PC-9 (cell line): ENCODE measurements at regions of chr17 and their contacts with region 1.

Region 1: GRCh38 chr17:33225509-33225908 is 67.6 kb downstream of the ASIC2 start:
- DNase-seq: peak in 1 of 2 experiments; percentile 17
- H3K4me3 ChIP-seq: no peak overlapping the region
- H3K27ac ChIP-seq: no peak overlapping the region
- H3K4me1 ChIP-seq: no peaks in the 10 kb centered on the region
- H3K27me3 ChIP-seq: peaks cover 10% of the 10 kb centered on the region; the same call in 1 of the 2 replicates
- CTCF ChIP-seq: no peak

Region 2: GRCh38 chr17:33545124-33545523 is 319.6 kb after region 1 on chr17:
- CTCF ChIA-PET with region 1: no interaction called
- POLR2A ChIA-PET with region 1: interaction called, 11 read pairs
- intact Hi-C with region 1: no loop called
- DNase-seq: no peak
- H3K4me3 ChIP-seq: no peak overlapping the region
- H3K27ac ChIP-seq: no peak overlapping the region
- H3K4me1 ChIP-seq: no peaks in the 10 kb centered on the region
- H3K27me3 ChIP-seq: peaks cover 11% of the 10 kb centered on the region; the same call in 1 of the 2 replicates
- CTCF ChIP-seq: no peak

Region 3: GRCh38 chr17:33696102-33696501 is 470.6 kb after region 1 on chr17:
- CTCF ChIA-PET with region 1: no interaction called
- POLR2A ChIA-PET with region 1: no interaction called
- intact Hi-C with region 1: no loop called
- DNase-seq: no peak
- H3K4me3 ChIP-seq: no peak overlapping the region
- H3K27ac ChIP-seq: no peak overlapping the region
- H3K4me1 ChIP-seq: no peaks in the 10 kb centered on the region
- H3K27me3 ChIP-seq: peaks cover 17% of the 10 kb centered on the region
- CTCF ChIP-seq: no peak